Tibial artery (tissue), 4 donors: ENCODE measurements at regions of chr3 and their contacts with region 1.

Region 1: GRCh38 chr3:168467115-168467714 is 371.5 kb upstream of the GOLIM4 start:
- DNase-seq: no peak
- H3K4me3 ChIP-seq: no peak overlapping the region
- H3K27ac ChIP-seq: no peak overlapping the region
- H3K4me1 ChIP-seq: no peaks in the 10 kb centered on the region
- H3K27me3 ChIP-seq: no peaks in the 10 kb centered on the region
- CTCF ChIP-seq: no peak

Region 2: DNA sequence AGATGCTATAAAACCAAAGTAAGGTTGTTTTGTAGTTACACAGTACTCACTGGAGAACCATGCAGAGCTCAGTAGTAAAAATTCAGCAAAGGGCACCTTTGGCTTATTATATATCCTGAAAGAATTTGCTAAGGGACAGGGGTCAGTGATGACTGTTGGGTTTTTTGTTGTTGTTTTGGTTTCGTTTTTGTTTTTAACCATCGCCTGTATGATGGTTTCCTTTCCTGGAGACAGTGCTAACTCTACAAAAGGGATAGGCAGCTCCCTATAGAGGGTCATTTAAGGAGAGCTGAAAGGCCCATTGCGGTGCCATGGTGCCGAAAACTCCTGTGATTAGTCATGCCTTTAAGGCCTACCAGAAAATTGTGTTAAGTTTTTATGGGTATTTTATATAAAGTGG is 253.3 kb before region 1 on chr3:
- intact Hi-C with region 1: loop called (anchors 10 kb)
- DNase-seq: no peak
- H3K4me3 ChIP-seq: no peak overlapping the region
- H3K27ac ChIP-seq: no peak overlapping the region
- H3K4me1 ChIP-seq: no peaks in the 10 kb centered on the region
- H3K27me3 ChIP-seq: no peaks in the 10 kb centered on the region
- CTCF ChIP-seq: no peak

Region 3: DNA sequence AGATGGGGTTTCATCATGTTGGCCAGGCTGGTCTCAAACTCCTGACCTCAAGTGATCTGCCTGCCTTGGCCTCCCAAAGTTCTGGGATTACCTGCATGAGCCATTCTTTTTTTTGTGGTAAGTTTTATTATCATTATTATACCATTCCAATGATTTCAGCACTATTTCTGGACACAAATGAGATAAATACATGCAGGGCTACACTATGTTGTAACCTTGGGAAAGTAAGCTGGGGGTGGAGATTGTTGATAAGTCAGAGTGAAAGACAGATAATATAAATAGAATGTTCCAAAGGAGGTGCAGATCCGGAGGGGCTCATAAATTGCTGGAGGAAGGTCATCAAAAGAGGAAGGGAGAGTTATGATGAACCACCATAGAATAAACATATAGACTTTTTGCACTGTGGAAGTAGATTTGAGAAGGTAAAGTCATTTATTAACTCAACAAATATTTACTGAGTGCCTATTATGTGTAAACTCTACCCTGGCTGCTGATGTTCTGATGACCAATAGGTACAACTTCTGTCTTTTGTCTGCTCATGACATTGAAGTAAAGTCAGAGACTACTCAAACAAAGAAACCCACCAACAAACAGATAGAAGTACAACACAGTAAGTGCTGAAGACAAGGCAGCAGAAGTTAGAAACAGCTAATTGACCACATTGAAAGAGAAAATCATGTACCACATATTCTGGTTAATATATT is 107.4 kb after region 1 on chr3:
- intact Hi-C with region 1: no loop called
- DNase-seq: no peak
- H3K4me3 ChIP-seq: no peak overlapping the region
- H3K27ac ChIP-seq: no peak overlapping the region
- H3K4me1 ChIP-seq: no peaks in the 10 kb centered on the region
- H3K27me3 ChIP-seq: no peaks in the 10 kb centered on the region
- CTCF ChIP-seq: no peak